Activated naive CD4-positive, alpha-beta T cell treated with anti-CD3 and anti-CD28 coated beads for 36 hours (primary cell): ENCODE measurements at regions of chr1 and their contacts with region 1.

Region 1: DNA sequence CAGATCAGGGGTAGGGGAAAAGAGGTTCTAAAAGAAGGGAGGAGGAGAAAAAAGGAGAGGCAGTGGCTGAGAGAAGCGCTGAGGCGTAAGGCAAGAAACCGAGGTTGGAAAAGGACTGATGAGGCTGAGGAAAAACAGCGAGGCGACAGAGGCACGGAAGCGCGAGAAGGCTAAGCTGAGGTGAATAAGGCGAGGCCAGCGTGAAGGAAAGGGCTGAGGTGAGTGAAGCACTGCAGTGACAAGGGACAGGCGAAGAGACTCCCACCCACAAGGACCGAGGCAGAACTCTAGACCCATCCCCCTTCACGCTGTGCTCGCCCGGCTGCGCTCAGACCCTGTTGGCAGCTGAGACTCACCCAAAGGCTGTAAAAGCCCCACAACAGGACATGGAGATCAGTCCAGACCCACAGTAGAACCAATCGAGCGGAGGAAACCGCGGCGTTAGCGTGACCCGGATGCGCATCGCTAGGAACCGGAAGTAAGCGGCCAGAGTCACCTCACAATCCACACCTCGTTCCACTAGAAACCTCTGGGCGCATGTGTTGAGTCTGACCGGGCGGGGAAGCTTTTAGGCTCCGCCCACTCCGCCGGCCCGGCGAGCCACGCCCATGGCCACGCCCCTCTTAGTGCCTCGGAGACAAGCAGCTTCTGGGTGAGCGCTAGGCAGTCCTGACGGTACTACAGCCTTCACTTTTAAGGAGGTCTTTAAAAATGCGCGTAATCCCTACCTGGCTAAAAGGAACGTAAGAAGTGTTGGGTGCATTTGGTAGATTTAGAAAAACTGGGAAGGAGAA is at the start of gene EYA3:
- DNase-seq: peak; percentile 99
- H3K4me3 Mint-ChIP-seq: peak within 1 kb of the TSS; percentile 91
- H3K27ac Mint-ChIP-seq: peak within 1 kb of the TSS; percentile 87
- H3K4me1 Mint-ChIP-seq: peaks cover 25% of the 10 kb centered on the region
- H3K27me3 Mint-ChIP-seq: peaks cover 3% of the 10 kb centered on the region
- total RNA-seq, gene EYA3: 25.4 to 25.9 TPM

Region 2: DNA sequence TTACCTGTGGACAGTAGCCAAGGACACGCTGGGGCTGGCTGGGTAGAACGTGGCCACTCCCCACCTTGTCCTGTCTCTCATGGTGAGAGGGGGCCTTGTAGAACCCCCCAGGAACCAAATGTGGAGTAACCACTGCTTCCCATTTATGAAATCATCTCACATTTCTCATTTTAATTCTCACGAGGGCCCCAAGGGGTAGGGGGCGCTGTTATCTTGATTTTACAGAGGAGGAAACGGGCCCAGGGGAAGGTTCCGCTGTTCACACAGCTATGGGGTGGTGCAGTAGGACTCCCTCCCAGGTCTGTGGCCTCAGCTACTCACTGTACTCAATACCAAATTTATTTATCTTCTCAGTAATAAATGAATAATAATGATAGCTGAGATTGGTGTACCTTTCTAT is 148.1 kb before region 1 on chr1:
- CTCF ChIA-PET with region 1: interaction called, 3 read pairs
- intact Hi-C with region 1: loop called (anchors 2 kb)
- DNase-seq: peak; percentile 90
- H3K4me3 Mint-ChIP-seq: no peak overlapping the region
- H3K27ac Mint-ChIP-seq: peak overlapping the region; percentile 15
- H3K4me1 Mint-ChIP-seq: peaks cover 26% of the 10 kb centered on the region
- H3K27me3 Mint-ChIP-seq: peaks cover 7% of the 10 kb centered on the region

Region 3: DNA sequence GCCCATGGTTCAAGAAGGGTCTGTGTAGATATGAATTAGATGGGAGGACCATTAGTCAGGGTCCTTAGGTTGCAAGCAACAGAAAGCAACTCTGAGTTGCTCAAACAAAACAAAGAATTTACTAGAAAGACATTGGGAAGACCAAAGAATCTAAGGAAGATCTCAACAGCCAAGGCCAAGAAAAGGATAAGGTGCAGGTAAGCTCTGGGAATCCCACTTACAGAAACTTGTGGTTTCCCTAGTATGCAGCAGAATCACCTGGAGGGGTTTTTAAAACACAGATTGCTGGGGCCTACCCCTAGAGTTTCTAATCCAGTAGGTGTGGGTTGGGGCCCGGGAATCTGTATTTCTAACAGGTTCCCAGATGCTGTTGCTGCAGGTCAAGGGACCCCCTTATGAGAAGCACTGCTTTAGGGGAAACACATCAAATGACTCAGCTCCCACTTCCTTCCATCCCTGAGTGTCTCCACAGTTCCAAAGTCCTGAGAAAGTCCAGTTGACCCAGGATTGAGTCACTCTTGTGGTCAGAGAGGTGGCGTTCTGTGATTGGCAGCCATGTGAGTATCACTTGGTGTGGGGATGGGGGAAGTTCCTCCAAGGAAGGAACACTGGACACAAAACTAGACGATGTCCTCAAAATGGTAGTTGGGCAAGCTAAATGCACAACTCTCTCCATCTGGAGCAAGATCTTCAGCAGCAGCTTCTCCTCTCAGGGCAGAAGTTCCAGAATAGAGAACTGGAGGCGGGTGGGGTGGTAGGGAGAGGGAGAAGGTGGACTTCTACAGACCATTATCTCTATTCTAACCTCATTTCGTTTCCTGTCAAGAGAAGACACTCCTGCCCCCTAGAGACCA is 24.2 kb after region 1 on chr1:
- CTCF ChIA-PET with region 1: interaction called, 29 read pairs
- intact Hi-C with region 1: loop called (anchors 2 kb)
- DNase-seq: peak; percentile 25
- H3K4me3 Mint-ChIP-seq: no peak overlapping the region
- H3K27ac Mint-ChIP-seq: no peak overlapping the region
- H3K4me1 Mint-ChIP-seq: peaks cover 13% of the 10 kb centered on the region
- H3K27me3 Mint-ChIP-seq: no peaks in the 10 kb centered on the region

Region 4: DNA sequence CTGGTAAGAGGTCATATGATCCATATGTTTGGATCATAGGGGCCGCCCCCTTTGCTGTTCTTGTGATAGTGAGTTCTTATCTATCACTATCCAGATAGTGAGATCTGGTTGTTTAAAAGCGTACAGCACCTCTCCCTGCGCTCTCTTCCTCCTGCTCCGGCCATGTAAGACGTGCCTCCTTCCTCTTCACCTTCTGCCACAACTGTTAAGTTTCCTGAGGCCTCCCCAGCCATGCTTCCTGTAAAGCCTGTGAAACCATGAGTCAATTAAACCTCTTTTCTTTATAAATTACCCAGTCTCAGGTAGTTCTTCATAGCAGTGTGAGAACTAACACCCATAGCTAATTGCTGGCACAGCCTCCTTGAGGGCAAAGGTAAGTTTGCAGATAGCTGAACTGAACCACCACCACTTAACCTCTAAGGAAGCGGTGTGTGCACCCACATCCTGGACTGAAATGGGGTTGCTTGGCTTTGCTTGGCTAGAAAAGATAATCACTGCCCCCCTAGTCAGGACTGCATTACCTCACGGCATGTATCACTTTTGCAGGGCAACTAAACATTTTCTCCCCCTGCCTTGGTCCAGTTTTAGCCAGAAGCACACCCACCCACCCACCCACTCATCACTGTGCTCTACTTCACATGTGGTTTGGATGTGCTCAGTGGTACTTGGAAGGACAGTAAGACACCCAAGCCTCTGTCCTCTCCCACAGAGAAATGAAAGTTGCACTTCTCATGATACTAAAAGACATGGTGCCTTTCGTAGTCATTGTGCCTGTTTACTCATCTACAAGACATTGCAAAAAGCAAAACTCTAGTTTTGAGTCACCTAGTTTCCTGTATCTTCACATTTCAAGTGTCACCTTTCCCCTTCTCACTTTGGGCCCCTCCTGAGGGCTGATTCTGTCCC is 111.2 kb after region 1 on chr1:
- CTCF ChIA-PET with region 1: interaction called, 132 read pairs
- intact Hi-C with region 1: loop called (anchors 2 kb)
- DNase-seq: peak; percentile 75
- H3K4me3 Mint-ChIP-seq: peak overlapping the region; percentile 31
- H3K27ac Mint-ChIP-seq: peak overlapping the region; percentile 90
- H3K4me1 Mint-ChIP-seq: peaks cover 42% of the 10 kb centered on the region
- H3K27me3 Mint-ChIP-seq: no peaks in the 10 kb centered on the region

Region 5: DNA sequence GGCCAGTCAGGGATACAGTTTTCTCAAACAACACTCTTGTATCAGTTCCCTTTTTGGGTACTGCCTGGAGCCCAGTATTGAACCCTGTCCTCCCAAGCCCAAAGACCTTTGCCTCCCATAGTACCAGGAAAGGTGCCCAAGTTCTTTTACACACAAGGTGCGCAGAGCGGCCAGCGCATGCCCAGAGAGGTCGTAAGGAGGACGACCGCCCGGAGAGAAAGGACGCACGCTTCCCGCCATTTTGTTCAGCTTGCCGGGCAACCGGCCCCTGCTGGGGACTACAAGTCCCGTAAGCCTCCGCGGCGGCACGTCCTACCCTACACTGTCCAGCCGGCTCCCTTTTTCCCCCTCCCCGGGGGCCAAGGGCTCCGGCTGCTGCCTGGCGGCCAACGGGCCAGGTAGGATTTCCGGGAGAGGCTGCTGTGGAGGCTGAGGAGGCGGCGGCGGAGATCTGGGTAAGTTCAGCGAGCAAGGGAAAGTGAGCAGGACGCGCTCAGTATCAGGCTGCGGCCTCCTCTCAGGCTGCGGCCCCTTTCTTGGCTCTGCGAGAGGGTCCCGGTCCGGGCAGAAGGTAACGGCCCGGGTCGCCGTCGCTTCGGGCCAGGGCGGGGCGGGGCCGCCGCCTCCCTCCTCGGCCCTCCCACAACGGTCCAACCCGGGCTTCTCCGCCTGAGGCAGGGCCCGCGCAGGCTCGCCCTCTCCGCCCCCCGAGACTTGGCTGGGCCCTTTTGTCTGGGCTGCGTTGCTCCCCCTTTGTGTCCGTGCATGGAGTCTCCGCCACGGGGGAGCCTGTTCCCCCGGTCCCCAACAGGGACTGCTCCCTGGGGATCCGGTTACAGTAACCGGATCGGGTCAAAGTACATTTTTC is 281.2 kb after region 1 on chr1 and contains the start of gene PHACTR4:
- CTCF ChIA-PET with region 1: no interaction called
- intact Hi-C with region 1: loop called (anchors 2 kb)
- DNase-seq: peak; percentile 86
- H3K4me3 Mint-ChIP-seq: peak within 1 kb of the TSS; percentile 85
- H3K27ac Mint-ChIP-seq: peak within 1 kb of the TSS; percentile 92
- H3K4me1 Mint-ChIP-seq: peaks cover 25% of the 10 kb centered on the region
- H3K27me3 Mint-ChIP-seq: no peaks in the 10 kb centered on the region
- total RNA-seq, gene PHACTR4: 16.3 to 17.2 TPM